ENCODE measurements at regions of chr5 and their contacts with region 1.

Region 1: GRCh38 chr5:73902327-73903051 is 276.5 kb downstream of the ARHGEF28 start:
- DNase-seq: peak; percentile 4
- ATAC-seq: no peak
- H3K4me3 Mint-ChIP-seq: no peak overlapping the region
- H3K27ac Mint-ChIP-seq: no peak overlapping the region
- H3K4me1 Mint-ChIP-seq: no peaks in the 10 kb centered on the region
- H3K27me3 Mint-ChIP-seq: peaks cover 9% of the 10 kb centered on the region
- CTCF ChIP-seq: peak; percentile 81

Region 2: GRCh38 chr5:73887683-73888082 is 14.8 kb before region 1 on chr5:
- CTCF ChIA-PET with region 1: interaction called, 13 read pairs
- POLR2A ChIA-PET with region 1: interaction called, 3 read pairs
- intact Hi-C with region 1: no loop called
- DNase-seq: no peak
- ATAC-seq: no peak
- H3K4me3 Mint-ChIP-seq: no peak overlapping the region
- H3K27ac Mint-ChIP-seq: no peak overlapping the region
- H3K4me1 Mint-ChIP-seq: no peaks in the 10 kb centered on the region
- H3K27me3 Mint-ChIP-seq: peaks cover 16% of the 10 kb centered on the region
- CTCF ChIP-seq: no peak

Region 3: DNA sequence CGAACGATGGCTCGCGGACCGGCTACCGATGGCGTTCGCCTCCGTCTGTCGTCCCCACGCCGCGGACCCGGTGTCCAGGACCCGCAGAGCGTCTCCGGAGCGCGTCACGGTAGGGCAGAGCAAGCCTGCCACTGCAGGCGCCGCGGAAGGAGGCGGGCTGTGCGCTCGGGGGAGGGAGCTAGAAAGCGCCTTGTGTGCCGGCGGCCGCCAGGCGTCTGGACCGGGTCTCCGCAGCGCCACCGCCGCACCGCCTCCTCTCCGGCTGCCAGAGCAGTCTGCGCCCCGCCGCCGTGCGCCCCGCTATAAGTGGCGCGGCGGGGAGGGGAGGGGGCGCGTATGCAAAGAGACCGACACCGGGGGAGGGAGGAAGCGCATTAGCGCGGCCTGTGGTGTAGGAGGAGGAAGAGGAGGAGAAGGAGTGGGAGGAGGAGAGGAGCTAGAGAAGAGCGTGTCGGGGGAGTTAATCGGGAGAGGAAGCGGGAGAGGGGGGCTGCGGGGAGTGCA is 738.0 kb after region 1 on chr5 and contains the start of gene ENC1:
- CTCF ChIA-PET with region 1: interaction called, 16 read pairs
- POLR2A ChIA-PET with region 1: no interaction called
- intact Hi-C with region 1: no loop called
- DNase-seq: peak; percentile 78
- ATAC-seq: peak; percentile 86
- H3K4me3 Mint-ChIP-seq: peak within 1 kb of the TSS; percentile 74
- H3K27ac Mint-ChIP-seq: no peak within 1 kb of the TSS
- H3K4me1 Mint-ChIP-seq: peaks cover 30% of the 10 kb centered on the region
- H3K27me3 Mint-ChIP-seq: peaks cover 39% of the 10 kb centered on the region
- CTCF ChIP-seq: peak; percentile 51
- total RNA-seq, gene ENC1: 0.16 to 0.60 TPM

Region 4: GRCh38 chr5:74648835-74649293 is 746.4 kb after region 1 on chr5:
- CTCF ChIA-PET with region 1: interaction called, 27 read pairs
- POLR2A ChIA-PET with region 1: no interaction called
- intact Hi-C with region 1: loop called (anchors 2 kb)
- DNase-seq: peak; percentile 43
- ATAC-seq: peak; percentile 72
- H3K4me3 Mint-ChIP-seq: no peak overlapping the region
- H3K27ac Mint-ChIP-seq: no peak overlapping the region
- H3K4me1 Mint-ChIP-seq: no peaks in the 10 kb centered on the region
- H3K27me3 Mint-ChIP-seq: peaks cover 15% of the 10 kb centered on the region
- CTCF ChIP-seq: peak; percentile 91